AG04449 (cell line): ENCODE measurements at regions of chr5 and their contacts with region 1.

Region 1: GRCh38 chr5:78359831-78360673 is at the start of gene SCAMP1:
- DNase-seq: no peak
- H3K4me3 ChIP-seq: peak within 1 kb of the TSS; percentile 95
- CTCF ChIP-seq: peak; percentile 9

Region 2: GRCh38 chr5:77718934-77719610 is 641.0 kb before region 1 on chr5:
- CTCF ChIA-PET with region 1: no interaction called
- POLR2A ChIA-PET with region 1: no interaction called
- DNase-seq: no peak
- H3K4me3 ChIP-seq: no peak overlapping the region
- CTCF ChIP-seq: no peak

Region 3: DNA sequence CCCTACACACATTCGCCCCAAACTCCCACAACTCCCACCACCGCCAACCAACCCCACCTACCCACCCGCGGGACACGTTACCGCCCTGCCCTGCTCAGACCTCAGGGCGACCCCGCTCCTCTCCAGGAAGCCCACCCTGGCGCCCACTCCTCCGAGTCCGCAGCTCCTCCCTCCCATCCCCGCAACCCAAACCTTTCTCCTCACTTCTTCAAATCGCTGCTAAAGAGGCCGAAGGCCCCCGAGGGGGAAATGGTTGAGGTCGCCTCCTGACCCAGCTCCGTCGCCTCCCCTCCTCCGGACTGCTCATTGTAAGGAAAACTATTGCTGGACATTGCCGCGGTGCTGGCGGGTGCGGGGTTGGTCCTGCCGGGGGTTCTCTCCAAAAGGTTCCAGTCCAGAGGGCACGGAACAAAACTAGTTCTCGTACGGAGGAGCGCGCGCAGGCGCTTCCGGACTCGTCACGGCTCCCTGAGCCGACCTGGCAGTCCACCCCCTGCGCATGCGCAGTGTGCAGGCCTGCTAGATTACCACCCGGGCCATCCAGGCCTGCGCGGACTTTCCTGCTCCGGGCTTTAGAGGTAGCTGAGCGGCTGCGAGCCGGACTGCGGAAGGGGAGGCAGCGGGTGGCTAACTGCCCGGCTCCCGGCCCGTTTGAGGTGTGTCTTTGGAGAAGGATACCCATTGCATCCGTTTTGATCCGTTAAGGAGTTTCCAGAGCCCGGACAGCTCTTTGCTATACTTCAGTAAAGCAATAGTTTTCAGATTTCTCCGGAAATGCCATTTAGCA is 65.6 kb before region 1 on chr5 and contains the start of gene AP3B1:
- CTCF ChIA-PET with region 1: interaction called, 3 read pairs
- POLR2A ChIA-PET with region 1: interaction called, 26 read pairs
- DNase-seq: peak; percentile 86
- H3K4me3 ChIP-seq: peak within 1 kb of the TSS; percentile 98
- CTCF ChIP-seq: no peak

Region 4: DNA sequence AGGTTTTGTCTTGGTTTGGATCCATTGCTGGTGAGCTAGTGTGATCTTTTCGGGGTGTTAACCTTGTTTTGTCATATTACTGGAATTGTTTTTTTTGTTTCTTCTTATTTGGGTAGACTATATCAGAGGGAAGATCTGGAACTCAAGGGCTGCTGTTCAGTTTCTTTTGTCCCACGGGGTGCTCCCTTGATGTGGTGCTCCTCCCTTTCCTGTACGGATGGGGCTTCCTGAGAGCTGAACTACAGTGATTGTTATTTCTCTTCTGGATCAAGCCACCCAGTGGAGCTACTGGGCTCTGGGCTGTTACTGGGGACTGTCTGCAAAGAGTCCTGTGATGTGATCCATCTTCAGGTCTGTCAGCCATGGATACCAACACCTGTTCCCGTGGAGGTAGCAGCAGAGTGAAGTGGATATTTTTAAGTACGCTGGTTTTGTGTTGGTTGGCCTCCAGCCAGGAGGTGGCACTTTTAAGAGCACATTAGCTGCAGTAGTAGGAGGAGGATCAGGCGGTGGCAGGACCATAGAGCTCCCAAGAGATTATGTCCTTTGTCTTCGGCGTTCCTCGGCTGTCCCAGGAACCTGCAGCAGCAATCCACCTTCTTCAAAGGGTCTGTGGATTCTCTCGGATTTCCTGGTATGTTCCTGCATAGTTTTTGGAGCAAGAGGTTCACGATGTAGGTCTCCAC is 27.6 kb after region 1 on chr5:
- CTCF ChIA-PET with region 1: no interaction called
- POLR2A ChIA-PET with region 1: no interaction called
- DNase-seq: no peak
- H3K4me3 ChIP-seq: no peak overlapping the region
- CTCF ChIP-seq: no peak